Sciatic nerve (tissue), 2 donors: ENCODE measurements at regions of chr1 and their contacts with region 1.

Region 1: GRCh38 chr1:186985889-186986491 is 157.2 kb downstream of the PLA2G4A start:
- DNase-seq: no peak
- ATAC-seq: peak; percentile 86

Region 2: DNA sequence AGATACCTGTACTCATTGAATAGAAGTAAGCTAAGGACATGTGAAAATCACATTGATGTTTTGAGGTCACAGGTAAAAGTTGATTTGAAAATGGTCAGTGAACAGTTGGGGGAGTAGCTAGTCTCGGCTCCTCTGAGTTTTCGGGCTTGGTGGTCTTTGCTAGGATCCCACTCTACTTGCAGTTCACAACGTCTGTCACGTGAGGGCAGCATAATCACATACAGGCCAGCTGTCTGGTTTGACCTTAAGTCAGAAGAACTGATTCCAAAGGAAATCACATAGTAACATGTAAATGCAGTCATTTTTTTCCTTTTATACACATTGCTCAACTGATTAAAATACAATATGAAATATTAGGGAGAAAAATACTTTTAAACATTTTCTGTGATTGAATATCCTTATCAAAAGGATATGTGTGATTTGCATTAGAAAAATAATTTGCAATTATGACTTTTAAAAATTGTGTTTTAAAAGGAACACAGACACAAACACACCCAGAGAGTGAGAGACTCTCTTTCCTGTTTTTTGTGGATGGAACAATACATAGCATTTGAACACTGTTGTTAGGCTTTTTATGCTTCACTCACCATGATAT is 503.2 kb before region 1 on chr1:
- intact Hi-C with region 1: loop called (anchors 10 kb)
- DNase-seq: peak; percentile 66
- ATAC-seq: peak; percentile 74

Region 3: GRCh38 chr1:186781730-186782129 is 204.3 kb before region 1 on chr1:
- intact Hi-C with region 1: no loop called
- DNase-seq: no peak
- ATAC-seq: peak; percentile 77